ENCODE measurements at regions of chr1 and their contacts with region 1.

Region 1: DNA sequence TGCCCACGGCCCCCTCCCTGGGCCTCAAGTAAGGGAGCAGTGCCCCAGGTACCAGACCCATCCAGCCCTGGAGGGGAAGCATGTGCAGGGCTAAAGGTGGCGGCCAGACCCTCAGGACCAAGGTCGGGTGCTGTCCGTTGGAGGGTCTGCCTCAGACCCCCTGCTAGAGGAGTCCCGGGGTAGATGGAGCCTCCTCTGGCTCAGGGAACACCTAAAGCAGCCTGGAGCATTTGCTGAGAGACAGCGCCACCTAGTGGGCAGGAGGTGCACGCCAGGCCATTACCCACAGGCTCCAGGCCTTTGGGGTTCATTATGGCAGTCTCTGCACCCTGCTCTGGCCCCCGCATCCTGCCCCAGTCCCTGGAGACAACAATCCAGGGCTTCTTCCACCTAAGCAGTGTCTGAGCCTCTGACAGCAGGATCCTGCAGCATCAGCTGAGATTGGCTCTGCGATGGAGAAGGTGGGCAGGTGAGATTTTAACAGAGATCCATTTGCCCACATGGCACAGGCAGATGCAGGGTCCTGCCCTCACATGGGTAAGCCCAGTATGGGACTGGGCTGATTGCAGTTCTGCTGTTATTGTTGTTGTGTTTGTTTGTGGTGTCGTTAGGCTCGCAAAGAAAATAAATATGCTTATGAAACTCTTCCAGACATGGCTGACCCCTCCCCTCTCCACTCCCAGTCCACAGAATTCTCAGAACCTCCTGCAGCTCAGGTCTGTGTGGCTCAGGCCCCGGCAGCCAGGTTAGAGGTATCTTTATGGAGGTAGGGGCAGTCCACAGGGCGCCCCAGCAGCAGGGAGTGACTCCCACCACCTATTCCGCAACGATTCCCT is 42.4 kb downstream of the CTNNBIP1 start:
- DNase-seq: peak; percentile 77 to 87
- H3K4me3 ChIP-seq: no peak overlapping the region
- H3K27ac ChIP-seq: no peak overlapping the region
- H3K4me1 ChIP-seq: peaks cover 0 to 7% (median 0%) of the 10 kb centered on the region in 4 donors
- H3K27me3 ChIP-seq: no peaks in the 10 kb centered on the region
- CTCF ChIP-seq: peak; percentile 96

Region 2: GRCh38 chr1:9399510-9400424 is 467.9 kb before region 1 on chr1:
- intact Hi-C with region 1: no loop called
- DNase-seq: peak in 1 of 2 donors; percentile 82
- H3K4me3 ChIP-seq: no peak overlapping the region
- H3K27ac ChIP-seq: peak overlapping the region; percentile 69 to 81
- H3K4me1 ChIP-seq: peaks cover 14 to 81% (median 49%) of the 10 kb centered on the region in 4 donors
- H3K27me3 ChIP-seq: no peaks in the 10 kb centered on the region
- CTCF ChIP-seq: no peak

Region 3: GRCh38 chr1:9629445-9630201 is 238.0 kb before region 1 on chr1:
- intact Hi-C with region 1: loop called (anchors 5 kb)
- DNase-seq: peak; percentile 48 to 78
- H3K4me3 ChIP-seq: no peak overlapping the region
- H3K27ac ChIP-seq: no peak overlapping the region
- H3K4me1 ChIP-seq: peaks cover 0 to 9% (median 5%) of the 10 kb centered on the region in 4 donors
- H3K27me3 ChIP-seq: peaks cover 0 to 25% of the 10 kb centered on the region in 2 donors
- CTCF ChIP-seq: no peak

Region 4: DNA sequence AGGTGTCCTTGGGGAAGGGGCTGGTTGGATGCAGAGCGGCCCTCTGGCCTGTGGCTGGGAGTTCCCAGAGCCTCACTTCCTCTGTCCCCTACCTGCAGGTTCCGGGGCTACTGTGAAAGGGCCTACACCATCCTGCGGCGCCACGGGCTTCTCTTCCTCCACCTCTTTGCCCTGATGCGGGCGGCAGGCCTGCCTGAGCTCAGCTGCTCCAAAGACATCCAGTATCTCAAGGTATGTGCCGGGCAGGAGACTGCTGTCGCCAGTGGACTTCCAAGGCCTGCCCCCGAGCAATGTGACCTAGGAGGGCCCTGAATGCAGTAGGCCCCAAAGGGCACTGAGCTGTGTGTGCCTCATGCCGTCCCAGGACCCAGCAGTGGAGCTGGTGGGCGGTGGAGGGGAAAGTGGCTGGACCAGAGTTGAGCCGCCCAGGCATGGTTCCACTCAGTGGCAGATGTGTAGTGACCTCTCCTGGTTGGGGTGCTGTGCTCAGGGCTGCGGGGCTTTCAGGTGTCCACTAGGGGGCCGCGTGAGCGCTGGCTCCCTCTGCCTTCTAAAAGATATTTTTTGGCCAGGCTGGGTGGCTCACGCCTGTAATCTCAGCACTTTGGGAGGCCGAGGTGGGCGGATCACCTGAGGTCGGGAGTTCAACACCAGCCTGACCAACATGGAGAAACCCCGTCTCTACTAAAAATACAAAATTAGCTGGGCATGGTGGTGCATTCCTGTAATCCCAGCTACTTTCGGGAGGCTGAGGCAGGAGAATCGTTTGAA is 142.7 kb before region 1 on chr1:
- intact Hi-C with region 1: loop called (anchors 10 kb)
- DNase-seq: peak in 1 of 2 donors; percentile 46
- H3K4me3 ChIP-seq: no peak overlapping the region
- H3K27ac ChIP-seq: no peak overlapping the region
- H3K4me1 ChIP-seq: no peaks in the 10 kb centered on the region
- H3K27me3 ChIP-seq: no peaks in the 10 kb centered on the region
- CTCF ChIP-seq: peak; percentile 57 to 61

Region 5: DNA sequence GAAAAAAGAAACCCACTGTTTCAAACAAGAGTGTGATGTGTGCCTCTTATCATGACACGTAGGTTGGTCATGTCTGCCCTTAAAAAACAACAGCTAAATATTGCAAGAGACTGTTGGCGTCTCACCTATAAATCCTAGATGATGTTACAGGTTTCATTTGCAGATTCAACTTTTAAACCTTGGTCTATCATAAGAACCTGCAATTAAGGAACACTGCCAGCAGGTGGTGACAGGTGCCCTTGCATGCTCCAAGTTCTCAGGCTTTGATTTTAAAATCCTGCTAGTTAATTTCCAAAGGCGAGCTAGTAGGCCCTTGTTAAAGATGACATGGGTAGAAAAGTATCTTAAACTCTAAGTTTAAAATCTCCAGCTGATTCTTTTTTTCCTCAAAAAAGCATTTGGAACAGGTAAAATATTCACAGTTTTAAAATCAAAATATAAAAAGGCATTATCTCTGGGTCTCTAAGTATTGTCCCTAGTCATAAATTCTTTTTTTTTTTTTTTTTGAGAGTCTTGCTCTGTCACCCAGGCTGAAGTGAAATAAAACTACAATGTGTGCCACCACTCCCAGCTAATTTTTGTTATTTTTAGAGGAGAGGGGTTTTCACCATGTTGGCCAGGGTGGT is 83.0 kb before region 1 on chr1:
- intact Hi-C with region 1: loop called (anchors 2 kb)
- DNase-seq: no peak
- H3K4me3 ChIP-seq: no peak overlapping the region
- H3K27ac ChIP-seq: no peak overlapping the region
- H3K4me1 ChIP-seq: no peaks in the 10 kb centered on the region
- H3K27me3 ChIP-seq: no peaks in the 10 kb centered on the region
- CTCF ChIP-seq: peak; percentile 58 to 70

Region 6: GRCh38 chr1:9900142-9901043 is 32.8 kb after region 1 on chr1:
- intact Hi-C with region 1: no loop called
- DNase-seq: peak; percentile 79 to 86
- H3K4me3 ChIP-seq: peak overlapping the region; percentile 19 to 31
- H3K27ac ChIP-seq: peak overlapping the region; percentile 65 to 69
- H3K4me1 ChIP-seq: peaks cover 0 to 28% (median 18%) of the 10 kb centered on the region in 4 donors
- H3K27me3 ChIP-seq: no peaks in the 10 kb centered on the region
- CTCF ChIP-seq: peak in 1 of 2 experiments; percentile 14

Region 7: GRCh38 chr1:10283318-10283984 is 415.8 kb after region 1 on chr1:
- intact Hi-C with region 1: no loop called
- DNase-seq: no peak
- H3K4me3 ChIP-seq: no peak overlapping the region
- H3K27ac ChIP-seq: no peak overlapping the region
- H3K4me1 ChIP-seq: peaks cover 0 to 30% (median 18%) of the 10 kb centered on the region in 4 donors
- H3K27me3 ChIP-seq: no peaks in the 10 kb centered on the region
- CTCF ChIP-seq: no peak

Measured in tibial artery (tissue), 4 donors.